Naive thymus-derived CD4-positive, alpha-beta T cell (primary cell): ENCODE measurements at regions of chr19 and their contacts with region 1.

Region 1: DNA sequence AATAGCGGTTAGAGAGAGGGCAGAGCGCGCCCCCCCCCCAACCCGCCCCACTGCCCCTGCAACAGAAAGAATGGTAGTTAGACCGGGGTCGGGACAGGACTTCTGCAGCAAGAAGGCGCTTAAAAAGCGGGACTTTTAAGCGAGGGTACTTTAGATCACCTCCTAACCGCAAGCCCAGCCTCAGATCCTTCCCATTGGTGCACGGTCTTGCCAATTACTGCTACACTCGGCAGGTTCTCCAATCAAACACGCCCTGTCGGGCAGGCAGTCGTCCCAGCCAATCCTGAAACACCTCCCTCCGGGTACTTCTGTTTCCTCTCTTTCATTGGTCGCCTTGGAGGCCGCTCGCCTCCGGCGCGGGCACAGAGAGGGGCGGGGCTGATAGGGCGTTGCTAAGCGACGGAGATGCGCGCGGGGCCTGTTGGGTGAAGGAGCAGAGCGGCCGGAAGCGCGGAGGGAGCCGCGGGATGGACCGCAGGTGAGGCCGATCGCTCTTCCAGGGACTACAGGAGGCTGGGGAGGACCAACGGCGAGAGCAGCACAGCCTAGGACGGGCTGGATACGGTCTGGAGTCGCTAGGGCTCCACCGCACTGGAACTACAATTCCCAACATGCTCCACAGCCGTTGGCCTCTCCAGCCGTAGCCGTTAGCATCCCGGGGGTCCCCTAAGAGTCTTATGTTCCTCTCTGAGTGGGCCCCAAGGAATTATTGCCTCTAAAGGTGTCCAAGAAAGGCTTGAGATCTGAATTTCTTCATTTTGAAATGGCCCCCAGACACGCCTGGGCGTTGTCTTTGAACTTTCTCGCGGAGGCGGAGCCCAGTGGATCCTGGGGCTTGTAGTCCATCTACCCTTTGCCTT is at the start of gene PROSER3:
- DNase-seq: peak; percentile 93 to 100 (median 99)
- ATAC-seq: peak; percentile 98
- H3K4me3 ChIP-seq: peak within 1 kb of the TSS; percentile 99
- H3K4me3 Mint-ChIP-seq: peak within 1 kb of the TSS; percentile 92 to 100 (median 96)
- H3K27ac ChIP-seq: peak within 1 kb of the TSS; percentile 92
- H3K27ac Mint-ChIP-seq: peak within 1 kb of the TSS; percentile 89 to 99 (median 95)
- H3K4me1 ChIP-seq: peaks cover 10 to 35% of the 10 kb centered on the region in 2 donors
- H3K4me1 Mint-ChIP-seq: peaks cover 13 to 42% (median 37%) of the 10 kb centered on the region in 7 donors
- H3K27me3 ChIP-seq: peaks cover 0 to 4% of the 10 kb centered on the region in 2 donors
- H3K27me3 Mint-ChIP-seq: peaks cover 0 to 12% (median 5%) of the 10 kb centered on the region in 5 donors
- total RNA-seq, gene PROSER3: 34.0 to 47.3 (median 39.7) TPM

Region 2: DNA sequence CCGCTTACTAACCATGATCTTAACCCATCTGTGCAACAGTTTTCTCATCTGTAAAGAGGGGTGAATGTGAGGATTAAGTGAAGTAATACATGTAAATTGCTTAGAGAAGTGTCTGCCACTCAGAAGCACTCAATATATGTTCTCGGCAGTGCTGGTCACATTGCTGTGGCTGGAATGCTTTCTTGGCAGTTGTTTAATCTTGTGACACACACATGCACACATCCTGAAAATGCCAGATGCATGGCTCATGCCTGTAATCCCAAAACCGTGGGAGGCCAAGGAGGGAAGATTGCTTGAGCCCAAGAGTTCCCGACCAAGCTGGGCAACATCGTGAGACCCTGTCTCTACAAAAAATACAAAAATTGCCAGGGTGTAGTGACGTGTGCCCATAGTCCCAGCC is 239.7 kb before region 1 on chr19:
- CTCF ChIA-PET with region 1: no interaction called
- POLR2A ChIA-PET with region 1: no interaction called
- intact Hi-C with region 1: no loop called
- DNase-seq: no peak
- ATAC-seq: no peak
- H3K4me3 ChIP-seq: no peak overlapping the region
- H3K4me3 Mint-ChIP-seq: no peak overlapping the region
- H3K27ac ChIP-seq: no peak overlapping the region
- H3K27ac Mint-ChIP-seq: no peak overlapping the region
- H3K4me1 ChIP-seq: no peaks in the 10 kb centered on the region
- H3K4me1 Mint-ChIP-seq: peaks cover 0 to 5% (median 0%) of the 10 kb centered on the region in 7 donors
- H3K27me3 ChIP-seq: no peaks in the 10 kb centered on the region
- H3K27me3 Mint-ChIP-seq: peaks cover 0 to 17% (median 12%) of the 10 kb centered on the region in 5 donors

Region 3: GRCh38 chr19:35702223-35703012 is 55.6 kb before region 1 on chr19:
- CTCF ChIA-PET with region 1: interaction called, 4 read pairs
- POLR2A ChIA-PET with region 1: no interaction called
- intact Hi-C with region 1: loop called in 1 of 2 experiments (anchors 1 kb)
- DNase-seq: peak; percentile 66 to 96 (median 90)
- ATAC-seq: peak; percentile 100
- H3K4me3 ChIP-seq: peak overlapping the region; percentile 85
- H3K4me3 Mint-ChIP-seq: peak overlapping the region; percentile 88 to 100 (median 96)
- H3K27ac ChIP-seq: peak overlapping the region; percentile 66
- H3K27ac Mint-ChIP-seq: peak overlapping the region; percentile 79 to 98 (median 93)
- H3K4me1 ChIP-seq: no peaks in the 10 kb centered on the region
- H3K4me1 Mint-ChIP-seq: peaks cover 5 to 22% (median 6%) of the 10 kb centered on the region in 7 donors
- H3K27me3 ChIP-seq: no peaks in the 10 kb centered on the region
- H3K27me3 Mint-ChIP-seq: peaks cover 0 to 4% (median 0%) of the 10 kb centered on the region in 5 donors

Region 4: GRCh38 chr19:35775298-35776110 is 17.5 kb after region 1 on chr19 and contains the start of gene ARHGAP33:
- CTCF ChIA-PET with region 1: no interaction called
- POLR2A ChIA-PET with region 1: interaction called, 5 read pairs
- intact Hi-C with region 1: loop called (anchors 1 kb)
- DNase-seq: peak; percentile 96 to 99 (median 98)
- ATAC-seq: peak; percentile 100
- H3K4me3 ChIP-seq: peak within 1 kb of the TSS; percentile 56
- H3K4me3 Mint-ChIP-seq: peak within 1 kb of the TSS; percentile 77 to 94 (median 86)
- H3K27ac ChIP-seq: peak within 1 kb of the TSS; percentile 61
- H3K27ac Mint-ChIP-seq: peak within 1 kb of the TSS in 7 of 9 donors; percentile 12 to 88 (median 84)
- H3K4me1 ChIP-seq: peaks cover 0 to 6% of the 10 kb centered on the region in 2 donors
- H3K4me1 Mint-ChIP-seq: peaks cover 11 to 28% (median 18%) of the 10 kb centered on the region in 7 donors
- H3K27me3 ChIP-seq: no peaks in the 10 kb centered on the region
- H3K27me3 Mint-ChIP-seq: no peaks in the 10 kb centered on the region
- total RNA-seq, gene ARHGAP33: 15.3 to 55.5 (median 23.4) TPM